Activated naive CD4-positive, alpha-beta T cell treated with anti-CD3 and anti-CD28 coated beads for 36 hours (primary cell): ENCODE measurements at regions of chr17 and their contacts with region 1.

Region 1: GRCh38 chr17:3738562-3739295 is 15.0 kb downstream of the HASPIN start:
- DNase-seq: peak; percentile 87
- H3K4me3 Mint-ChIP-seq: peak overlapping the region; percentile 25
- H3K27ac Mint-ChIP-seq: peak overlapping the region; percentile 4
- H3K4me1 Mint-ChIP-seq: peaks cover 32% of the 10 kb centered on the region
- H3K27me3 Mint-ChIP-seq: no peaks in the 10 kb centered on the region

Region 2: DNA sequence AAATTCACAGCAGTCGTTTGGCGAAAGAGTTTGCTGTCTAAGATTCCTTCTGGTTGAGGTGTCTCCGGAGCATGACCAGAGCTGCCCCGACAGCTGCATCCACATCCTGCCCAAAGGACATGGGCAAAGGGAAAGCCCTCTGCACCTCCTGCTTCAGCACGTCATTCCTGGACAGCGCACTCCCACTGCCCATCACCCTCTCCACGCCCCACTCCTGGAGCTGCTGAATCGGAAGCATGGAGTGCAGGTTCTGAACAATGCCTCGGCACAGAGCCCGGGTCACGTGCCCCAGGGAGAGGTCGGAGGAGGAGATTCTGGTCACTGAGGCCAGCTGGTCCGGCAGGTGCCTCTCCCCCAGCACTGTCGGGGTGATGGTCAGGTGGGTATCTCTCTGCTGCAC is 128.2 kb before region 1 on chr17:
- CTCF ChIA-PET with region 1: no interaction called
- intact Hi-C with region 1: no loop called
- DNase-seq: no peak
- H3K4me3 Mint-ChIP-seq: no peak overlapping the region
- H3K27ac Mint-ChIP-seq: no peak overlapping the region
- H3K4me1 Mint-ChIP-seq: no peaks in the 10 kb centered on the region
- H3K27me3 Mint-ChIP-seq: no peaks in the 10 kb centered on the region

Region 3: GRCh38 chr17:3695723-3696411 is 42.9 kb before region 1 on chr17 and contains the start of gene P2RX5:
- CTCF ChIA-PET with region 1: interaction called, 9 read pairs
- intact Hi-C with region 1: loop called (anchors 1 kb)
- DNase-seq: peak; percentile 48
- H3K4me3 Mint-ChIP-seq: peak within 1 kb of the TSS; percentile 94
- H3K27ac Mint-ChIP-seq: peak within 1 kb of the TSS; percentile 88
- H3K4me1 Mint-ChIP-seq: peaks cover 20% of the 10 kb centered on the region
- H3K27me3 Mint-ChIP-seq: no peaks in the 10 kb centered on the region
- total RNA-seq, gene P2RX5: 45.2 to 47.4 TPM

Region 4: DNA sequence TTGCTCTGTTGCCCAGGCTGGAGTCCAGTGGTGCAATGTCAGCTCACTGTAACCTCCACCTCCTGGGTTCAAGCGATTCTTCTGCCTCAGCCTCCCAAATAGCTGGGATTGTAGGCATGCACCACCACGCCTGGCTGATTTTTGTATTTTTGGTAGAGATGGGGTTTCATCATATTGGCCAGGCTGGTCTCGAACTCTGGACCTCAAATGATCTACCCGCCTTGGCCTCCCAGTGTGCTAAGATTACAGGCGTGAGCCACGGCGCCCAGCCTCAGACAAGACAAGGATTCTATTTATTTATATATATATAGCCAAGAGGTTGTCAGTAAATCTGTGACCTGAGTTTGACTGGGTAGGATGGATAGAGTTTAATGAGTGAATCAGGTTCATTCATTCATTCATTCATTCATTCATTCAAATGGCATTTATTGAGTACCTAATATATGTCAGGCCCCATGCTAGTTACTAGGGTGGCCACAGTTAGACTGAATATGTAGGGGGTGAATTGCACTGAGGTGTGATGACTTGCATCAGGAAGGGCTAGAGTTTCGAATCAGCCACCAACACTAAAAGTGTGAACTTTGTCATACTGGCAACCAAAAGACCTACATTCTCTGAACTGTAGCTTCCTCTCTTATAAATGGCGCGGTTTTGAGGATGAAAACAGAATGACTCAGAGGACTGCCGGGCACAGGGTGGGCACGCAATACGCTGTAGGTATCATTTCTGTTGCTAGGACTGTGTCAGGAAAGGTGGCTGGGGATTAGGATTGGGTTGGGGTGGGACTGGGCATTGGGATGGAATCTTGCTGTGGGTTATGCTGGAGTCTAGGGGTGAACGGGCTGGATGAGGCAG is 24.4 kb after region 1 on chr17:
- CTCF ChIA-PET with region 1: interaction called, 11 read pairs
- intact Hi-C with region 1: loop called (anchors 1 kb)
- DNase-seq: peak; percentile 60
- H3K4me3 Mint-ChIP-seq: no peak overlapping the region
- H3K27ac Mint-ChIP-seq: peak overlapping the region; percentile 42
- H3K4me1 Mint-ChIP-seq: peaks cover 34% of the 10 kb centered on the region
- H3K27me3 Mint-ChIP-seq: no peaks in the 10 kb centered on the region

Region 5: GRCh38 chr17:3818786-3819185 is 80.1 kb after region 1 on chr17:
- CTCF ChIA-PET with region 1: interaction called, 205 read pairs
- intact Hi-C with region 1: no loop called
- DNase-seq: no peak
- H3K4me3 Mint-ChIP-seq: no peak overlapping the region
- H3K27ac Mint-ChIP-seq: no peak overlapping the region
- H3K4me1 Mint-ChIP-seq: no peaks in the 10 kb centered on the region
- H3K27me3 Mint-ChIP-seq: no peaks in the 10 kb centered on the region

Region 6: DNA sequence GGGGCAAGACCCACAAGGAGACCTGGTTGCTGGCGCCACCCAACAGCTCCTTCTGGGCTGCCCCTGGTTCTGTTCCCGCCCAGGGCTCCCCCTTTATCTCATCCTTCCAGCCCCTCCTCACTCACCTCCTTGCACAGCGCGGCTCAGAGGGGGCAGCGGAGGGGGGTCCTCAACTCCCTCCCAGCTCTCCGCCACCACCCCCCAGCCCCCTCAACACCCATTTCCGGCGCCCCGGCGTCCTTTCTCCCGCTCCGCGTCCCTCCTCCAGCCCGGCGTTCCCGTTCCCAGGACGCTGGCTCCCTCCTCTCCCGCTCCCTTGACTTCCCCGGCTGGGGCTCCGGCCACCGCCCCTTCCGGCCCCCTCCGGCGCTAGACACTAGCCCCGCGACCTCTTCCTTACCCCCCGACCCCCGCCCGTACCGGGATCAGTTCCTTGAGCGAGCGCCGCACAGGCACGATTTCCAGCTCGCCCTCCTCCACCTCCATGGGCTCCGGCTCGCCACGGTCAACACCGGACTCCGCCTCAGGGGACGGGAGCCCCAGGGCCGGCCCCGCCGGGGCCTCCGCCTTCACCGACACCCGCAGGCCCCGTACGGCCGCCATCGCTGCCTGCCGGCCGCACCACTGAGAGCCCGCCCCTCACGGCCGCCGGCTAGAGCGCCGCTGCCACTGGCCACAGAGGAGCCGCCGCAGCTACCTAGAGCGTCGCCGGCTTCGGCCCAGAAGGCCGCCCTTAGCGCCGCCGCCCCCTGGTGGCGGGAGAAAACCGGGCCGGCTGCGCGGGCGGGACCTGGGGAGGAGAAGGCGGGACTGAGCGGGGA is 107.1 kb after region 1 on chr17 and contains the start of gene NCBP3:
- CTCF ChIA-PET with region 1: interaction called, 83 read pairs
- intact Hi-C with region 1: loop called (anchors 1 kb)
- DNase-seq: peak; percentile 91
- H3K4me3 Mint-ChIP-seq: peak within 1 kb of the TSS; percentile 94
- H3K27ac Mint-ChIP-seq: peak within 1 kb of the TSS; percentile 90
- H3K4me1 Mint-ChIP-seq: peaks cover 22% of the 10 kb centered on the region
- H3K27me3 Mint-ChIP-seq: no peaks in the 10 kb centered on the region
- total RNA-seq, gene NCBP3: 33.9 to 40.4 TPM